Mammary epithelial cell (primary cell): ENCODE measurements at regions of chr9 and their contacts with region 1.

Region 1: DNA sequence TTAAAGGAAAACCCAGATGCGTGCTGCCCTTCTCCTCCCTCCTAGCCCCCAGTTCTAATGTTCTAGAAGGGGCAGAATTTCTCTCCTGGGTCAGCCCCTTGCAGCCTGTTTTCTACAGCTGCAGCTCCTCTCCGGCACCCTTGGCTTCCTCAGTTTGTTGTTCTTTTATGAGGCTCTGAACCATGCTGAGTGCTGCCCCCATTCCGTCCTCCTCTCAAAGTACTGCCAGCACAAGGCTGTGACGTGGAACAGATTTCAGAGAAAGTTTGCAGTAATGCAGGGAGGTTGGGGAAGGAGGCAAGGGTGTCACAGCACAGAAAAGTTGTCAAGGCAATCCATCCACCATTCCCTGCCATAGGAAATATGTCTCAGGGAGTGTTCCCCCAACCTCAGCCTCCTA is 63.3 kb downstream of the RGS3 start:
- DNase-seq: no peak
- H3K4me3 ChIP-seq: no peak overlapping the region
- H3K27ac ChIP-seq: no peak overlapping the region
- H3K4me1 ChIP-seq: peaks cover 3% of the 10 kb centered on the region
- H3K27me3 ChIP-seq: no peaks in the 10 kb centered on the region
- CTCF ChIP-seq: no peak

Region 2: GRCh38 chr9:113479174-113479621 is 47.6 kb before region 1 on chr9:
- CTCF ChIA-PET with region 1: no interaction called
- dilution Hi-C with region 1: loop called (anchors 5 kb)
- in situ Hi-C with region 1: no loop called
- intact Hi-C with region 1: no loop called
- DNase-seq: no peak
- H3K4me3 ChIP-seq: no peak overlapping the region
- H3K27ac ChIP-seq: no peak overlapping the region
- H3K4me1 ChIP-seq: no peaks in the 10 kb centered on the region
- H3K27me3 ChIP-seq: no peaks in the 10 kb centered on the region
- CTCF ChIP-seq: no peak